Heart right ventricle (tissue), 16 donors: ENCODE measurements at regions of chr7 and their contacts with region 1.

Region 1: DNA sequence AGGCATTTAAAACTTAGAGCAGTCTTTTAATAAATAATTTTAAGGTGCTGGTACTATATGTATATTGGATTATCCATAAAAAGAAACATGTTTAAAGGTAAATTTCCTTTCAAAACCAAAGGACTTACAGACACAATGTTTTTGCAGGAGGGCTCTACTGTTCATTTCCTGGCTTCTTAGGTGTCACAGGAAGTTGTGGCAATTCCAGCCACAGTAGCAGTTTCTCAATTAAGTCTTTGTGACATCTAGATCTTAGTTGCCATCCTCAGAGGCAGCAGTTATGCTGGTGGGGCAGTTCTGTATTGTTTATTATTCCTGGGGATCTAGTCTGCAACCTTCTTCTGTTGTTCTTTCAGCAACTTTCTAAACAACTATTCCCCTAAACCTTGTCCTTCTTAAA is 460.1 kb downstream of the MAGI2 start:
- DNase-seq: no peak
- ATAC-seq: no peak
- H3K4me3 ChIP-seq: no peak overlapping the region
- H3K27ac ChIP-seq: no peak overlapping the region
- H3K4me1 ChIP-seq: no peaks in the 10 kb centered on the region
- H3K27me3 ChIP-seq: no peaks in the 10 kb centered on the region
- CTCF ChIP-seq: no peak

Region 2: DNA sequence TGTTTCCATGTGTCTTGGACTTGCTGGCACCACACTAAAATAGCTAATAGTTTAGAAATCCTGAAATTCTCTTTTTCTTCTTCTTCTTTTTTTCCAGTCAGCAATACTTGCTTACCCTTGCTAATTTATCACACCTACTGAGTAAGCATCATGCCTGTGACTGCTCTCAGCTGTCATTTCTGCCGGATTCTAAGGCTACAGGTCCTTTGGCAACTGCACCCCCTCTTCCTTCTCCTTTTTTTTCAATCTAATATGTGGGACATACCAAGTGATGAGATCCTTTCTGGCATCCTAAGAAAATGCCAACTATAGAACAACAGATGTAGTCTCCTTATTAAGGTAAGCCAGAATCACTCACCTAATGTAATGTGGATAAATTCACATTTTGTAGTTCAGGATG is 15.4 kb after region 1 on chr7:
- intact Hi-C with region 1: loop called in 1 of 10 experiments (anchors 1 kb)
- DNase-seq: no peak
- ATAC-seq: no peak
- H3K4me3 ChIP-seq: no peak overlapping the region
- H3K27ac ChIP-seq: no peak overlapping the region
- H3K4me1 ChIP-seq: no peaks in the 10 kb centered on the region
- H3K27me3 ChIP-seq: no peaks in the 10 kb centered on the region
- CTCF ChIP-seq: no peak

Region 3: DNA sequence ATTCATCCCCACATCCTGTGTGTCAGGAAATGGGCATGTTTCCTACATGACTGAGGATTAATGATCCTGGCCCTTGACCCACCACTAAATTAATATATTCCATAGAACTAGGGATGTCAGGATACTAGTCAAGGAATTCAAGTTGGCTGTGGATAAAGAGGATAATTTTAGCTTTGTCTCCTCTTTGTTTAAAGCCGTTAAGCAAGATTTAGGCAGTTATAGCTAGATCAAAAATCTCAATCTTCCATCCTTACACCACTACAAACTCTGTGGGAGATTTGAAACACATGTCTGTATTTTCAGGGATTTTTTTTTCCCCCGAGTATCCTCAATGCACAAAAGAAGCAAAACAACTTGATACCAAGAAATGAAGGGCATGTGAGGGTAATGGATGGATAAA is 43.0 kb after region 1 on chr7:
- intact Hi-C with region 1: no loop called
- DNase-seq: no peak
- ATAC-seq: no peak
- H3K4me3 ChIP-seq: no peak overlapping the region
- H3K27ac ChIP-seq: no peak overlapping the region
- H3K4me1 ChIP-seq: no peaks in the 10 kb centered on the region
- H3K27me3 ChIP-seq: no peaks in the 10 kb centered on the region
- CTCF ChIP-seq: no peak